Right ventricle myocardium superior (tissue), 1 donor: ENCODE measurements at regions of chr6 and their contacts with region 1.

Region 1: GRCh38 chr6:125191916-125192609 is 38.5 kb downstream of the TPD52L1 start:
- DNase-seq: peak; percentile 44
- ATAC-seq: peak; percentile 60

Region 2: GRCh38 chr6:125301435-125302391 is 109.7 kb after region 1 on chr6 and contains the start of gene HDDC2:
- intact Hi-C with region 1: loop called (anchors 10 kb)
- DNase-seq: peak; percentile 88
- ATAC-seq: peak; percentile 92
- total RNA-seq, gene HDDC2: 84.8 TPM